Posterior vena cava (tissue), 2 donors: ENCODE measurements at regions of chr11 and their contacts with region 1.

Region 1: DNA sequence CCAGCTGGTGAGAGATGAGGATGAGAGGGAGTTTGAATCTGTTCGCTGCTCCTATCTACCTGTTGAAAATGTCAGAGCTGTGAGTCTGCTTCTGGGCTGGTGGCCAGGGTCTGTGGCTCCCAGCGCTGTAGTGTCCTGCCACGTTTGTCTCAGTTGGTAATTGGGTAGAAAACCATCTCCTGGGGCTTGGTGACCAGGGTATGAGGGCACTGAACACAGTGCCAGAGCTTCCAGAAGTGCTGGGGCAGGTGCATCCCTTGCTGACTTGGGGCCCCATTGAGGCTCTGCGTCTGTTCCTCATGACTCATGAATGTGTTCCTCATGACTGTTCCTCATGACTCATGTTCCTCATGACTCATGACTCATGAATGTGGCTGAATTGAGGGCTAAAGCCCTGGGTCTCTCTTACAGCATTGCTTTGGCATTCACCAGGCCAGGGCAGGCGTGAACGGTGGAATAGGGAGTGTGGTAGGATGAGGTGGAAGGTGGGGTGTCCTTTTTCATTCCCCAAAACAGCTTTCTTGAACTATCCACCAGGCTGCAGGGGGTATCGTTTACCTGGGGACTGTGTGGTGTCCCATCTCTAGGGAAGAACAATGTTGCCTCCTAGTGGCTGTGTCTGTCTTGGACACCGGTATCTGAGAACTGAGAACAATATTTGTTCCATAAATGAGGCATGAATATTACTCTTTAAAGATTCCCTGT is 139.5 kb downstream of the COMMD9 start:
- DNase-seq: peak; percentile 86

Region 2: GRCh38 chr11:34192481-34193401 is 1956.9 kb before region 1 on chr11:
- intact Hi-C with region 1: loop called in 1 of 2 experiments (anchors 5 kb)
- DNase-seq: peak; percentile 94

Region 3: GRCh38 chr11:36196411-36196998 is 46.8 kb after region 1 on chr11:
- intact Hi-C with region 1: no loop called
- DNase-seq: no peak

Region 4: GRCh38 chr11:36890121-36890679 is 740.5 kb after region 1 on chr11:
- intact Hi-C with region 1: no loop called
- DNase-seq: no peak